Lower leg skin (tissue), 4 donors: ENCODE measurements at regions of chr14 and their contacts with region 1.

Region 1: GRCh38 chr14:103518422-103519042 is 4.1 kb downstream of the CKB start:
- DNase-seq: peak in 1 of 2 donors; percentile 91
- H3K4me3 ChIP-seq: no peak overlapping the region
- CTCF ChIP-seq: no peak
- POLR2A ChIP-seq: no peak

Region 2: GRCh38 chr14:102351026-102351425 is 1167.5 kb before region 1 on chr14:
- intact Hi-C with region 1: no loop called
- DNase-seq: no peak
- H3K4me3 ChIP-seq: no peak overlapping the region
- CTCF ChIP-seq: no peak
- POLR2A ChIP-seq: no peak

Region 3: GRCh38 chr14:102509744-102510615 is 1008.6 kb before region 1 on chr14 and contains the start of gene ANKRD9:
- intact Hi-C with region 1: loop called (anchors 5 kb)
- DNase-seq: peak; percentile 91 to 99
- H3K4me3 ChIP-seq: peak within 1 kb of the TSS; percentile 32
- CTCF ChIP-seq: no peak
- POLR2A ChIP-seq: no peak
- total RNA-seq, gene ANKRD9: 64.6 to 135 (median 69.4) TPM

Region 4: DNA sequence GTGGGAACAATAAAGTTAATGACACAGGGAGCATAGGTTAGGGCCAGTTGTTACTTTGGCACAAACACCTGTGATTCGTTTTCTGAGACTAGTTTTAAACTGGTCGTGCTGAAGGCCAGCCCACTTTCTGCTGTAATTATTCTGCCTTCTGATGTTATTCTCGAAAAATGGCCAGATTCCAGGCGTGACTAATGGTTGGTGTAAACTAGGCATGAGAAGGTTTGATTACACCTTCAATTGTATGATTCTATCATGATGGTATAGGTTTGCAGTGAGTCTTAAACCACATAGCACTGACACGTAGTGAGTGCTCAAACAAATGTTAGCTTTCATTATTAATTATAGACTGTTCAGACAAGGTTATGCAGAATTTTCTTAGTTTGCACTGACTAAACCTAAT is 34.9 kb before region 1 on chr14:
- intact Hi-C with region 1: loop called (anchors 1 kb)
- DNase-seq: no peak
- H3K4me3 ChIP-seq: no peak overlapping the region
- CTCF ChIP-seq: no peak
- POLR2A ChIP-seq: no peak

Region 5: GRCh38 chr14:103562429-103563225 is 44.1 kb after region 1 on chr14 and contains the starts of genes BAG5 and COA8:
- intact Hi-C with region 1: no loop called
- DNase-seq: peak; percentile 70 to 97
- H3K4me3 ChIP-seq: peak within 1 kb of the TSS; percentile 94
- CTCF ChIP-seq: no peak
- POLR2A ChIP-seq: no peak
- total RNA-seq, gene BAG5: 40.3 to 44.3 (median 43.1) TPM
- total RNA-seq, gene COA8: 21.0 to 32.9 (median 30.0) TPM

Region 6: DNA sequence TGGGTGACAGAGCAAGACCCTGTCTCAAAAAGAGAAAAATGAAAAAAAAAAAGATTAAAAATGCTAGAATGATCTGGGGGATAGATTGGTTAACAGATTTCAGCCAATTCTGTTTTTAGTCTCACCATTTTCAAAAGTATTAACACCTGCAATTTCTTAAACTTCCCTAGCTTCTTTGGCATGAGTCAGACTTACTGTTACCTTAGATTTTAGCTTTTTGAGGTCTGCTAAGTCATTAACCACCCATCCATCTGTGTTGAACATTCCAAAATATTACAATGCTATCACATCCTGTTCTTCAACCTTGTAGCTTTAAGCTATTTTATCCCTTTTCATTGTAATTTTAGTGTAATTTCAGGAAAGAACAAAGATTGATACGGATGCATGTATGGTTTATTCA is 269.6 kb after region 1 on chr14:
- intact Hi-C with region 1: no loop called
- DNase-seq: no peak
- H3K4me3 ChIP-seq: no peak overlapping the region
- CTCF ChIP-seq: no peak
- POLR2A ChIP-seq: no peak